Activated CD4-positive, alpha-beta memory T cell treated with anti-CD3 and anti-CD28 coated beads, Interleukin-2, amount 10 ng/mL, durations not matched to agents 7 days and 5 days (primary cell): ENCODE measurements at regions of chr1 and their contacts with region 1.

Region 1: DNA sequence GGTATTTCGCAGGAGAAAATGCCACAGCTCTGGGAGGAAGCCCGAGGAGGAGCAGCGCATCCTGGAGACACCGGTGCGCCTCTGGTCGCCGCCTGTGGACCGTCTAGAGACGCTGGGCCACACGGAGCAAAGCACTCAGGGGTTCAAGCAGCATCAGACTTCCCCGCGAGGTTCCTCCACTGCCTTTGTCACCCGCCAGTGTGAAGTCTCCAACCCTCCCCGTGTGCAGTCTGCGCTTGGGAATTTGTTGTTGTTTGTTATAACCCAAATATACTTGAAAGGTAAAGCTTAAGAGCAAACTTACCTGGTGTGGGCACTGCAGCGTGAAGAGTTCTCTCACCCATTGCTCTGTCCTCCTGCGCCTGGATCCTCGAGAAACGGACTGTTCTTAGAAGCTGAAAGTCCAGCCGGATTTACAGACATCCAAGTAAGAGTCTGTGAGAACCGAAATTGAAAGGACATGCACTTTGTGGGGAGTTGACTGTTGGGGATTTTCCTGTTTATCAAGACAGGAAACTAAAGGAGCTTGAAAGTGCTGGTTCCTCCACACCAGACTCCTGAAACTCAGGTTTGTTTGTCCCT is at the start of gene GBP4:
- DNase-seq: peak; percentile 59
- H3K4me3 Mint-ChIP-seq: peak within 1 kb of the TSS; percentile 91
- H3K27ac Mint-ChIP-seq: peak within 1 kb of the TSS; percentile 89
- H3K4me1 Mint-ChIP-seq: peaks cover 63% of the 10 kb centered on the region
- H3K27me3 Mint-ChIP-seq: no peaks in the 10 kb centered on the region
- total RNA-seq, gene GBP4: 61.6 to 70.6 TPM

Region 2: GRCh38 chr1:89065079-89065868 is 133.3 kb before region 1 on chr1 and contains the start of gene GBP1:
- CTCF ChIA-PET with region 1: no interaction called
- POLR2A ChIA-PET with region 1: interaction called, 22 read pairs
- DNase-seq: no peak
- H3K4me3 Mint-ChIP-seq: peak within 1 kb of the TSS; percentile 96
- H3K27ac Mint-ChIP-seq: peak within 1 kb of the TSS; percentile 88
- H3K4me1 Mint-ChIP-seq: peaks cover 59% of the 10 kb centered on the region
- H3K27me3 Mint-ChIP-seq: no peaks in the 10 kb centered on the region
- total RNA-seq, gene GBP1: 141 to 144 TPM

Region 3: GRCh38 chr1:89095737-89096136 is 102.8 kb before region 1 on chr1:
- CTCF ChIA-PET with region 1: no interaction called
- POLR2A ChIA-PET with region 1: no interaction called
- DNase-seq: no peak
- H3K4me3 Mint-ChIP-seq: no peak overlapping the region
- H3K27ac Mint-ChIP-seq: no peak overlapping the region
- H3K4me1 Mint-ChIP-seq: no peaks in the 10 kb centered on the region
- H3K27me3 Mint-ChIP-seq: no peaks in the 10 kb centered on the region

Region 4: DNA sequence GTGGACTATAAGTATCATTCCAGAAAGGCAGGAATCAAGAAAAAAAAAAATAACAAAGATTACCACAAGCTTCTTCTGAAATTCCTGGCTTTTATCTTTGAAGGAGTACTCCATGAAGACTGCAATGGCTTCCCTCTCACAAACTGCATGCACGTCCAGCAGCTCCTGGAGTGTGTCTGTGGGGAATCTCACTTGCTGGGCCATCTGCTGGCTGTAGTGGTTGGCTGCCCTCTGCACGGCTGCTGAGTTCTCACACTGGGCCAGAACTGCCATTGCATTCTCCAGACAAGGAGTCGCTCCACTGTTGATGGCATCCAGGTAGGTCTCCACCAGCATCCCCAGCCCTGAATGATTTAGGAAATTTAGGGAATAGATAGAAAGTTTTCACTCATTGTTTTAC is 49.4 kb before region 1 on chr1:
- CTCF ChIA-PET with region 1: no interaction called
- POLR2A ChIA-PET with region 1: no interaction called
- DNase-seq: no peak
- H3K4me3 Mint-ChIP-seq: no peak overlapping the region
- H3K27ac Mint-ChIP-seq: no peak overlapping the region
- H3K4me1 Mint-ChIP-seq: peaks cover 2% of the 10 kb centered on the region
- H3K27me3 Mint-ChIP-seq: peaks cover 8% of the 10 kb centered on the region

Region 5: DNA sequence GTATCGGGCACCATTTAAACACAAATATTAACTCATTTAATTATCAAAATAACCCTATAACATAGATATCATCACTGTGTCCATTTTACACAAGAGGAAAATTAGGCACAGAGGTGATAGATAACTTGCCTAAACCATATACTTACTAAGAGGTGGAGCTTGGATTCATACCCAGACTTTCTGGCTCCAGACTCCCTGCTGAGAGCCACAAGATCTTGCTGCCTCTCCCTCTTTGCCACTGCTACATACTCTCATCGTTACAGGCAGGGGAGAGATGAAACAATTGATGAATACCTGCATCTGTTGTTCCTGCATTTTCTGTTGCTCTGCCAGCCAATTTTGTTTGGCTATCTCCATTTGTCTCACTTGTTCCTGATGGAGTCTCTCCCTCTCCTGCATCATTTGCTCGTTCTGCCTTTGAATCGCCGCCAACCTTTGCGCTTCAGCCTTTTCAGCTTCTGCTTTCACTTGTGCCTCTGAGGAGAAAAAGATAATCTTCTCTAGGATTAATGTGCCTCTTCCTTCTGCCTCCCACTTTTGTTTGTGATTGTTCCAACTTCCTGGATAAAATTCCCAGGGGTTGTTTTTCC is 63.4 kb after region 1 on chr1:
- CTCF ChIA-PET with region 1: no interaction called
- POLR2A ChIA-PET with region 1: interaction called, 33 read pairs
- DNase-seq: no peak
- H3K4me3 Mint-ChIP-seq: peak overlapping the region; percentile 34
- H3K27ac Mint-ChIP-seq: peak overlapping the region; percentile 84
- H3K4me1 Mint-ChIP-seq: peaks cover 75% of the 10 kb centered on the region
- H3K27me3 Mint-ChIP-seq: no peaks in the 10 kb centered on the region

Region 6: DNA sequence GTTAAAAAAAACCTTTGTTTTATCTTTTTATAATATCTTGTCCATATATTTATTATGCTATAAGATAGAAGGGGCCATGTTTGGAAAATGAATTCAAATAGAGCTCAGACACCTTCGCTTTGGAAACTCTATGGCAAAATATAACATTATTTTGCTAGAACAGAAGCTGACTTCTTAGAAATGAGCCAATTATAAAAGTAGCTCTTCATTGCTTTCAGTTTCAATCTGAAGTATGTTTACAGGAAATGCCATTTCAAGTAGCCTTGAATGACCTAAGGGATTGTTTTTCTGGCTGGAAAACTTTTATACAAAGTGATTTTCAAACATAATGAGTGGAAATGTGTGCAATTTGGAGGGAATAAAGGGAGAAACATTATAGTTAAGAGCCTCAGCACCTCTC is 111.9 kb after region 1 on chr1:
- CTCF ChIA-PET with region 1: interaction called, 4 read pairs
- POLR2A ChIA-PET with region 1: interaction called, 11 read pairs
- DNase-seq: no peak
- H3K4me3 Mint-ChIP-seq: peak overlapping the region; percentile 26
- H3K27ac Mint-ChIP-seq: peak overlapping the region; percentile 94
- H3K4me1 Mint-ChIP-seq: peaks cover 44% of the 10 kb centered on the region
- H3K27me3 Mint-ChIP-seq: no peaks in the 10 kb centered on the region